ENCODE measurements at regions of chr17 and their contacts with region 1.

Region 1: DNA sequence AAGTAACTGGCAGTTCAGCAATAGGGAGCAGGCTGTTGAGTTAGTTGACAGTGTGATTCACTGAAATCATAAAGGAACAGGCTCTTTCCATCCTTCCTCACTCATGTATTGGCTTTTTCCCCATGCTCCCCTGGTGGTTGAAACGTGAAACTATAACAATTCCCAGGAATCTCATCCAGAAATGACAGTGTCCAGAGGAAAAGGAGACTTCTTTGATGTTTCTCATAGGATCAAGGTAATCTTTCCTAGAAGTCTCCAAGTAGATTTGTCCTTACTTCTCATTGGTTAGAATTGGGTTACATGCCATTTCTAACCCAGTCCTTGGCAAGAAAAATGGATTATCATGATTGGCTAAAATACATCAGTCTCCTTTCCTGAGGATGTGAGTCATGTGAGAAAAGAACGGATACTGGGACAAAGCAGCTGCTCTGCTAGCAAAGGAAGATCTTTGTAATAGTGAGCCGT is 14.4 kb downstream of the TTC19 start:
- DNase-seq: peak; percentile 64
- H3K27ac ChIP-seq: no peak overlapping the region
- CTCF ChIP-seq: peak; percentile 52

Region 2: DNA sequence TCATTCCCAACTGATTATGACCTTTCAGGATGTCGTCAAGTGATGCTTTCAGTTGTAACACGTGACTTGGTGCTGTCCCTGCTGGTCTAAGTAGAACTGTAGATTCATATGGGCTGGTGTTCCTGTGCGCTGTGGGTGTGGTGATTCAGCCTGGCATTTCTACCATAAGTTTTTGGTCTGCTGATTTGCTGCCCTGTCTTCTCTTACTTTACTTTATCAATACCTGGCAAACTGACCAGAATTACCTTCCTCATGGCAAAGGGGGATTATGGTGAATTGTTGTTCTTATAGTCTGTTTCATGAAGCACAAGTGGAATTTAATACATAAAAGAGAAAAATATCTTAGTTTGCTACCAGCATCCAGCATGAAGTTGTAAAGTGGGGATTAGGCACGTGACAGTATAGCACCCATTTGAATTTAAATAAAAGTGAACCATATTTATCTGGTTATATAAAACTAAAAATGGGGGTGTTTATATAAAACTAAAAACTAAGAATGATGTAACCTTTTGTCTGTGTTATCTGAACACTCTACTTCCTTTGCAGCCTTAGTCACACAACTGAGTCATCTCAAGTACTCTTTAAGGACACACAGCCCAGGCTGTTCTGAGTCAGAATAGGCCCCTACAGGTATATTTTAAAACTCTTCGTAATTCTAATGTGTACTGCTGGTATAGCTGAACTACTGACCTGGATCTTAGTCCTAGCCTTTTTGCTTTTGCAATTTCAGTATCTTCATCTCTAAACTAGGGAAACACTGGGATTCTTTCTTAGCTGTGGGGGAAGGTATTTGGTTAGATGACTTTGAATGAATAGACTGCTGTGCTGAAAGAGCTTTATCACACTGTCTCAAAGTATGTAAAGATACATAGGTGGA is 14.0 kb after region 1 on chr17:
- CTCF ChIA-PET with region 1: interaction called, 11 read pairs
- POLR2A ChIA-PET with region 1: no interaction called
- DNase-seq: peak; percentile 90
- H3K27ac ChIP-seq: no peak overlapping the region
- CTCF ChIP-seq: no peak

Measured in RWPE1 (cell line).